GM12878 (cell line): ENCODE measurements at regions of chr7 and their contacts with region 1.

Region 1: GRCh38 chr7:24659505-24659904 is 86.3 kb downstream of the PALS2 start:
- DNase-seq: peak; percentile 27
- ATAC-seq: peak; percentile 92
- H3K4me3 ChIP-seq: no peak overlapping the region; the same call in 1 of the 2 replicates
- H3K27ac ChIP-seq: peak overlapping the region; percentile 20; the same call in 1 of the 2 replicates
- H3K4me1 ChIP-seq: peaks cover 3% of the 10 kb centered on the region; the same call in 1 of the 2 replicates
- H3K27me3 ChIP-seq: no peaks in the 10 kb centered on the region
- CTCF ChIP-seq: no peak
- EP300 ChIP-seq: no peak
- POLR2A ChIP-seq: no peak
- RAD21 ChIP-seq: no peak

Region 2: DNA sequence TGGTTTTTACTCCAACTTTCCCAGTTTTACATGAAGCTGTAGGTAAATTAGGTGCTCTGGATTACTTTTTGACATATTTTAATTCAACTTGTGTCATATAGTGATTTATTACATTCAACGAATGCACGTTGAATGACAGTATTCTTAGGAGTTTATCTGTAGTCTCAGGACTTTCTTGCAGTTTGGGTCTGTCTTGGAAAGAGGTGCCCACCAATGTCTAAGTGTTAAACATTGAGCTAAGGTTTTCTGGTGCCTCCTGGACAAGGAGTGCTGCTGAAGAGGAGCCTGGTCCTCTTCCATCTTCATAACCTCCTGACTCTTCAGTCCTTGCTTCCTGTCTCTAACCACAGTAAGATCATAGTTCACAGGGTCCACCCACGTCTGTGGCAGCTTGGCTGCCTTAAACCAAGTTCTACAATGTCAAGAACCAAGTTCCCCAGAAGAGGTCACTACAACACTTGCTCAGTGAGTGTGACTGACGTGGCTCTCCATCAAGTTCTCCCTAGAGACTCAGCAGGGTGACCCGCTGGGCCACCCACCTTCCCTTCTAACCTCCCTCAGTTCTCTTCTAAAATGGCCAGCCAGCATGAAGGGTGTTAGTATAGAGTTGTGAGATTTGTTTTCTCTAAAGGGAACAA is 369.4 kb before region 1 on chr7:
- CTCF ChIA-PET with region 1: interaction called, 16 read pairs
- POLR2A ChIA-PET with region 1: no interaction called
- RAD21 ChIA-PET with region 1: interaction called, 11 read pairs
- SMC1A ChIA-PET with region 1: interaction called, 18 read pairs
- in situ Hi-C with region 1: loop called (anchors 5 kb)
- intact Hi-C with region 1: no loop called
- DNase-seq: peak; percentile 70
- ATAC-seq: peak; percentile 99
- H3K4me3 ChIP-seq: no peak overlapping the region
- H3K27ac ChIP-seq: no peak overlapping the region
- H3K4me1 ChIP-seq: 0 out of 2 replicates have a peak, but pooled peaks cover 2% of the 10 kb centered on the region
- H3K27me3 ChIP-seq: peaks cover 7% of the 10 kb centered on the region in 2 experiments
- CTCF ChIP-seq: peak; percentile 63 to 76 (median 71)
- EP300 ChIP-seq: no peak
- POLR2A ChIP-seq: no peak
- RAD21 ChIP-seq: peak; percentile 90

Region 3: DNA sequence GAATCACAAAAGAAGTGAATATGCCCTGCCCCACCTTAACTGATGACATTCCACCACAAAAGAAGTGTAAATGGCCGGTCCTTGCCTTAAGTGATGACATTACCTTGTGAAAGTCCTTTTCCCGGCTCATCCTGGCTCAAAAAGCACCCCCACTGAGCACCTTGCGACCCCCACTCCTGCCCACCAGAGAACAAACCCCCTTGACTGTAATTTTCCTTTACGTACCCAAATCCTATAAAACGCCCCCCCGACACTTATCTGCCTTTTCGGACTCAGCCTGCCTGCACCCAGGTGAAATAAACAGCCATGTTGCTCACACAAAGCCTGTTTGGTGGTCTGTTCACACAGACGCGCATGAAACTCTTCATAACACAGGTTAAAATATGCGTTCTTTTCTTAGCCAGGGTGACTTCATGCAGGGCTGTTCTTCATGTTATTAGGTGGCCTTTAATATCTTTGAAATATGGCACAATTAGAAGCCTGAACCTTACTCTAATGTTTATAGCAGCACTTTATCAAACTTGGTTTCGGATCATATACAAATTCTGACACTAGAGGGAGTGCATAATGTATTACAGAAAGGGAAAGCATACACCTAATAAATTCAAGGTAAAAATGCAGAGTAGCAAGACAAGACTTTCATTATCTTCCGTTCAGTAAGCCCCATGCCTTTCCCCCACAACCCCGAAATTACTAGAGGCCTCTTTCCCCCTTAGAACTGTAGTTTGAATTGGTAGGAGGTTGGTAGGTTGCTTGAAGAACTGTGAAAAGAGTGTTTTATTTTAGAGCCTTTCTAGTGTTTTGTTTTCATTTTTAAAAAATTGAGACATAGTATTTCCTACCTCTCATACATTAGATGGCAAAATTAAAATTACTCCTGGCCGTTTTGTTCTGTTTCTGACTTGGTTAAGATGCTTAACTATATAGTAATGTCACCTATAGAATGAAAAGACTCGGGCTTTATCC is 257.6 kb before region 1 on chr7:
- CTCF ChIA-PET with region 1: interaction called, 4 read pairs
- POLR2A ChIA-PET with region 1: no interaction called
- RAD21 ChIA-PET with region 1: no interaction called
- SMC1A ChIA-PET with region 1: interaction called, 3 read pairs
- in situ Hi-C with region 1: loop called (anchors 5 kb)
- intact Hi-C with region 1: no loop called
- DNase-seq: no peak
- ATAC-seq: peak; percentile 81
- H3K4me3 ChIP-seq: no peak overlapping the region
- H3K27ac ChIP-seq: no peak overlapping the region
- H3K4me1 ChIP-seq: peaks cover 9% of the 10 kb centered on the region
- H3K27me3 ChIP-seq: no peaks in the 10 kb centered on the region
- CTCF ChIP-seq: peak; percentile 38 to 52 (median 50); a peak in 5 of 6 replicates
- EP300 ChIP-seq: no peak
- POLR2A ChIP-seq: no peak
- RAD21 ChIP-seq: peak; percentile 72